ENCODE measurements at regions of chrX and their contacts with region 1.

Region 1: DNA sequence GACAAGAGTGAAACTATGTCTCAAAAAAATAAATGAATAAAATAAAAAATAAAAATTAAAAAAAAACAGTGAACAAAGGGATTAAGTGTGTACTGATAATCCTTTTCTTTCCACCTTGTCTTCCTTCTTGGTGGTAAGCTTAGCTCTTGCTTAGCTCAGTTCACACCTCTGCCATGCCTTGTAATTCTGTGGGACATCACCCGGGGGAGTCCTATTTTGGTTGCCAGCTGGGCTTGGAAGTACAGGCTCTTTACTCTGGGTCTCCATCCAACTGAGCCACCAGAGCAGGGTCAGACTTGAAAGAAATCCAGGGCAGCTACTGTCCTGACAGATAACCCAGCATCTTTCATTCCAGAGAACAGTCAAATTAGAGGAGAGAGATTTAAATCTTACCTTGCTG is 204.2 kb upstream of the TEX13A start:
- DNase-seq: no peak
- H3K4me3 ChIP-seq: no peak overlapping the region
- H3K27ac ChIP-seq: no peak overlapping the region
- H3K4me1 ChIP-seq: no peaks in the 10 kb centered on the region
- H3K27me3 ChIP-seq: no peaks in the 10 kb centered on the region
- CTCF ChIP-seq: no peak
- POLR2A ChIP-seq: no peak

Region 2: GRCh38 chrX:104816949-104817348 is 607.8 kb before region 1 on chrX:
- intact Hi-C with region 1: loop called (anchors 10 kb)
- DNase-seq: no peak
- H3K4me3 ChIP-seq: no peak overlapping the region
- H3K27ac ChIP-seq: no peak overlapping the region
- H3K4me1 ChIP-seq: no peaks in the 10 kb centered on the region
- H3K27me3 ChIP-seq: no peaks in the 10 kb centered on the region
- CTCF ChIP-seq: no peak
- POLR2A ChIP-seq: no peak

Region 3: GRCh38 chrX:105488716-105489115 is 64.0 kb after region 1 on chrX:
- intact Hi-C with region 1: no loop called
- DNase-seq: no peak
- H3K4me3 ChIP-seq: no peak overlapping the region
- H3K27ac ChIP-seq: no peak overlapping the region
- H3K4me1 ChIP-seq: no peaks in the 10 kb centered on the region
- H3K27me3 ChIP-seq: no peaks in the 10 kb centered on the region
- CTCF ChIP-seq: no peak
- POLR2A ChIP-seq: no peak